Caco-2 (cell line): ENCODE measurements at regions of chr1 and their contacts with region 1.

Region 1: DNA sequence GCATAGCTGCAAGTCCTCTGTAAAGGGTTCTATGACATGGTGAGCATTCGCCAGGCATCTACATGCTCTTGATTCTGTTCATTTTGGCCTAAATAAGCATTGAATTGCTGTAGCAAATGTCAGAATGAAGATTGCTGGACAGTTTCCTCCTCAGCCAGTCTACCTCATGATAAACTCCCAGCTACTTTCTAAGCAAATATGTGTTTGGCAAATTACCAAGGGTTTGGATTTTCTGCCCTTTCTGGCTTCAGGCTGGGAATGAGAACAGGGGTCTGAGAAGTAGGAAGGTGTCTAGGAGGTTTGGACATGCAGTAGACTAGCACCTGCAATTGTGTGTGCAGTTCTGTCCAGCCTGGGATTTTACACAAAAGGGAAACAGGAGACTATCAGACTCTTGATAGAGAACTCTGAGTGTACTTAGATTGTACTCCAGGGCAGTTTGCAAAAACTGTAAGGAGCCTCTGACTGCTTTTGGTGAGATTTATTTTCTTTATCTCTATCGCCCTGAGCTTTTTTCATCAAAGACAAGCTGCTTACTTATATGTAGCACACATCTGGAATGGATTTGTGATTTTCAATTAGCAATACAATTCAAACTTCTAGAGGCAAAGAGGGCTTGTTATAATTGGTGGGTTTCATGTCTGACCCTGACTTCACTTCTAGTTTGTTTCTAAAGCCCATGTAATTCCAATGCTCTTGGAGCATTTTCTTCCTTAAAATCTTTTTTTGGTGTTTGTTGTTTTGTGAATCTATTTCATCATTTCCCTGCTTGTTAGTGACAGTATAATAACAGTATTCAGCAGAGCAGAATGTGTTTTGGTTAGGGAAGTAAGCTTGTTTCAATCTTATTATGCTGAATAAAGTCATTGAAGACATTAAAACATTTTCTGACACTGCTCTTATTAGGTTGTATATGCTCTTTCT is 150.8 kb downstream of the VPS13D start:
- DNase-seq: no peak
- H3K4me3 ChIP-seq: no peak overlapping the region
- H3K4me3 Mint-ChIP-seq: peak overlapping the region; percentile 34
- H3K27ac Mint-ChIP-seq: peak overlapping the region; percentile 86
- H3K4me1 ChIP-seq: peaks cover 37% of the 10 kb centered on the region
- H3K4me1 Mint-ChIP-seq: peaks cover 27% of the 10 kb centered on the region
- H3K27me3 ChIP-seq: no peaks in the 10 kb centered on the region
- H3K27me3 Mint-ChIP-seq: no peaks in the 10 kb centered on the region
- CTCF ChIP-seq: no peak

Region 2: DNA sequence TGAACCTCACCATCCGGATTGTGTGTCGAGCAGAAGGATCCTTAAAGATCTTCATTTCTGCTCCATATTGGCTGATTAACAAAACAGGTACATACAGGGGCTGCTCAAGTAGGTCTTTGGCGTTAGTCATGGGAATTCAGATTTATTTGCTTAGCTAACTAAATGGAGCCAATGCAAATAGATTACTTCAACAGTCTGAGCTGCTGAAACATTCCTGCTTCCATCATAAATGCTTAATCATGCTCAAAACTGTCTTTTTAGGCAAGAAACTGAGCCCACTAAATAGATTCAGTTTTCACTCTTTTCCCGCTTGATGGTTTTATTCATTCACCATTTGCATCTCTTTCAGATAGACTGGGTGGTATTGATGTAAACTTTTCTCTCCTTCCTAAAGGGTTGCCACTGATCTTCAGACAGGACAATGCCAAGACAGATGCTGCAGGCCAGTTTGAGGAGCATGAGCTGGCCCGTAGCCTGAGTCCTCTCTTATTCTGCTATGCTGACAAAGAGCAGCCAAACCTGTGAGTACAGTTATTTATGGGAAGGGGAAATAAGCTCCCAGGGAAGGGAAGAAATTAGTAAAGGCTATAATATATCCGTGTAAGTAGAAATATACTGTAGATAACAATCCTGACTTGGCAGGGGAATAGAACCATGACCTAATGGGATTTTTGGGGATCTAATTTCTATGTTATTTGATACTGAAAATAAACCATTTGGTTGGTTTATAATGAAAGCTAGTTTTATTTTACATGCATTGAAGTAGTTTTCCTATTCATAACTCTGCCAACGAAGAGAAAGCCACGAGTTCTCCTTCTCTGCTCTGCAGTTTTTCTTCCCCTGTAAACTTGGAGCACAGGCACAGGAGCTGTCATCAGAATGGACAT is 24.3 kb before region 1 on chr1:
- CTCF ChIA-PET with region 1: no interaction called
- POLR2A ChIA-PET with region 1: interaction called, 5 read pairs
- intact Hi-C with region 1: loop called (anchors 1 kb)
- DNase-seq: peak in 1 of 2 experiments; percentile 41
- H3K4me3 ChIP-seq: no peak overlapping the region
- H3K4me3 Mint-ChIP-seq: peak overlapping the region; percentile 32
- H3K27ac Mint-ChIP-seq: peak overlapping the region; percentile 81
- H3K4me1 ChIP-seq: peaks cover 49% of the 10 kb centered on the region
- H3K4me1 Mint-ChIP-seq: peaks cover 23% of the 10 kb centered on the region
- H3K27me3 ChIP-seq: no peaks in the 10 kb centered on the region
- H3K27me3 Mint-ChIP-seq: no peaks in the 10 kb centered on the region
- CTCF ChIP-seq: no peak

Region 3: DNA sequence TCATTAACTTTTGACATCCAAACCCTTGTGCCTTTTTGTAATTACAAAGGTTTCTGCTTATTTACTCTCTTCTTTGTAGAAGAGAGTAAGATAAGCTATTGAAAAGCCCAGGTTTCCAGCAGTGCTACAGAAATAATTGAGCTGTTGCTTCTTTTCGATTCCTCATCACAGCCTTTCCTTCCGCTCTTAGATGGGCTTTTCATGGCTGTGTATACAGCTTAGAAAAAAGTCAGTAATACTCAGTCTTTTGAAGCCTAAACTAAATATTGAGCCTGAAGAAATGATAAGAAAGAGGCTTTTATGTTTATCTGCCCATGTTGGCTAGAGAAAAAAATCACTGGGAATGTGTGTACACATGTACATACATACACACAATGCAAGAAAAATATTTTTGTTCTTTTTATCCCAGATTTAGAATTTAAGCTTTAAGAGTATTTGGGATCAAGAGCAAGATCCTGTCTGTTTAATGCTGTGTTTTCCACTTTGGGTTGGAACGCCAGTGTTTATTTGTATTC is 21.6 kb after region 1 on chr1:
- CTCF ChIA-PET with region 1: no interaction called
- POLR2A ChIA-PET with region 1: interaction called, 5 read pairs
- intact Hi-C with region 1: loop called (anchors 1 kb)
- DNase-seq: peak in 1 of 2 experiments; percentile 39
- H3K4me3 ChIP-seq: no peak overlapping the region
- H3K4me3 Mint-ChIP-seq: no peak overlapping the region
- H3K27ac Mint-ChIP-seq: no peak overlapping the region
- H3K4me1 ChIP-seq: peaks cover 38% of the 10 kb centered on the region
- H3K4me1 Mint-ChIP-seq: peaks cover 6% of the 10 kb centered on the region
- H3K27me3 ChIP-seq: no peaks in the 10 kb centered on the region
- H3K27me3 Mint-ChIP-seq: no peaks in the 10 kb centered on the region
- CTCF ChIP-seq: no peak

Region 4: GRCh38 chr1:12454406-12455391 is 74.1 kb after region 1 on chr1:
- CTCF ChIA-PET with region 1: no interaction called
- POLR2A ChIA-PET with region 1: no interaction called
- intact Hi-C with region 1: no loop called
- DNase-seq: no peak
- H3K4me3 ChIP-seq: no peak overlapping the region
- H3K4me3 Mint-ChIP-seq: no peak overlapping the region
- H3K27ac Mint-ChIP-seq: no peak overlapping the region
- H3K4me1 ChIP-seq: 0 out of 2 replicates have a peak, but pooled peaks cover 10% of the 10 kb centered on the region
- H3K4me1 Mint-ChIP-seq: peaks cover 7% of the 10 kb centered on the region
- H3K27me3 ChIP-seq: no peaks in the 10 kb centered on the region
- H3K27me3 Mint-ChIP-seq: no peaks in the 10 kb centered on the region
- CTCF ChIP-seq: no peak